Ascending aorta (tissue), 2 donors: ENCODE measurements at regions of chr19 and their contacts with region 1.

Region 1: GRCh38 chr19:44723952-44724319 is 24.6 kb upstream of the BCL3 start:
- DNase-seq: peak in 1 of 2 donors; percentile 89
- H3K4me3 ChIP-seq: no peak overlapping the region
- H3K27ac ChIP-seq: no peak overlapping the region
- H3K4me1 ChIP-seq: peaks cover 4 to 24% of the 10 kb centered on the region in 2 donors
- H3K27me3 ChIP-seq: no peaks in the 10 kb centered on the region
- CTCF ChIP-seq: peak; percentile 96 to 99 (median 97)

Region 2: DNA sequence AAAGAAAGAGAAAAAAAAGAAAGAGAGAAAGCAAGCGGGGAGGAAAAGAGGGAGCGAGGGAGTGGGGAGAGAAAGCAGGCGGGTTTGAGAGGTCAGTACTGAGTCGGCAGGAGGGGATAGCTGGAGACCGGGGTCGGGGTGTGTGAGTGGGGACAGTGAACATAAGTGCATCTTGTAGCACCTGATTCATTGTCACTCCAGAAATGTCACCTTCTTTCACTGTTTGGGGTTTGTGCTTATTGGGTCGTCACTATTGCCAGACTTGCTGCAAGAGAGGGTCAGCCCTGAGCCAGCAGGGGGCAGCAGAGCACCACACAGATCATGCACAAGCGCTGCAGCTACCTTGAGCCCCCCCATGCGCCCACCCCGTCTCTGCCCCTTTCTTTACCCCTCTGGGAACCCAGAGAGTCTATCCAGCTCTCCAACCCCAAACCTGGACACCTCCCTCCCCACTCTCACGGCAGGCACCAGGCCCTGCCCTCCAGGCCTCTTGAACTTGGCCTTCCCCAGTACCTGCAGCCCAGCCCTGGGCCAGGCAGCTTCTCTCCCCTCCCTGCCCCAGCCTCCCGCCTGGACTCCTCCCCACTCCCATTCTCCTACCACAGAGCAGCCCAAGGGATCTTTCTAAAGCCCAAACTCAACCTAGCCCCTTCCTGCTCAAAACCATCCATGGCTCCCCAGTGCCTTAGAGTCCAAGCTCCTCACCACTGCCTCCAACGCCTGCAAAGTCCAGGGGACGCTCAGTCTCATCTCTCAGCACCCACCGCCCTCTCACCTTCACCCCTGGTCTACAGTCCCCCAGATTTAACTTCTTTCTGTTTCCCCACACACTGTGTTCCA is 34.7 kb before region 1 on chr19:
- intact Hi-C with region 1: loop called (anchors 2 kb)
- DNase-seq: peak in 1 of 2 donors; percentile 80
- H3K4me3 ChIP-seq: no peak overlapping the region
- H3K27ac ChIP-seq: no peak overlapping the region
- H3K4me1 ChIP-seq: peaks cover 0 to 12% of the 10 kb centered on the region in 2 donors
- H3K27me3 ChIP-seq: no peaks in the 10 kb centered on the region
- CTCF ChIP-seq: peak; percentile 91 to 95 (median 91)

Region 3: GRCh38 chr19:44741841-44742352 is 18.0 kb after region 1 on chr19:
- intact Hi-C with region 1: loop called (anchors 2 kb)
- DNase-seq: peak; percentile 97 to 99
- H3K4me3 ChIP-seq: peak overlapping the region in 1 of 2 donors; percentile 17
- H3K27ac ChIP-seq: peak overlapping the region; percentile 82 to 83
- H3K4me1 ChIP-seq: peaks cover 24 to 32% of the 10 kb centered on the region in 2 donors
- H3K27me3 ChIP-seq: no peaks in the 10 kb centered on the region
- CTCF ChIP-seq: no peak

Region 4: DNA sequence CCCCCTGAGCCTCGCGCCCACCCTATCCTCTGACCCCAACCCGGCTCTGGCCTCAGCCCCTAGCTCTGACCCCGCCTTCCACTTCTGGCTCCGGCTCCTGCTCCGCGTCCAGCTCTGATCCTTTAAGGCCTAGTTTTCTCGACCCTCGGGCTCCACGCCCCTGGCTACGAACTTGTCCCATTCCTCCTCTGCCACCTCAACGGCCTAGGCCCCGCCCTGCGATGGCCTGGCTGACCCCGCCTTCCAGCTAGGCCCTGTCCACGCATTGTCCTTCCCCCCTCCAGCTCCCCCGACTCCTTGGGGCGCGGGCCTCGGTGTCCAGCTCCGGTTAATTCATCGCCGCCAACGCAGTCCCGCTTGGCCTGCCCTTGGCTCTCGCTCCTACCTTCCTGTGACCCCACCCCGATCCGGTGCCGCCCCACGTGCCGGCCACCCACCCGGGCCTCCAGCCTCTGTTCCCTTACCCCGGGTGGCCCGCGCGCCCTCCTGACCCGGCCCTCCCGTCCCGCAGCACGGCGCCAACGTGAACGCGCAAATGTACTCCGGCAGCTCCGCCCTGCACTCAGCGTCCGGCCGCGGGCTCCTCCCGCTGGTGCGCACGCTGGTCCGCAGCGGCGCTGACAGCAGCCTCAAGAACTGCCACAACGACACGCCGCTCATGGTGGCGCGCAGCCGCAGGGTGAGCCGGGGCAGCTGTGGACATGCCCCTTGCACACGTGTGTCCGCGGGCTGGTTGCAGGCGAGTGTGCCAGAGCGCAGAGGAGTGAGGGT is 34.0 kb after region 1 on chr19:
- intact Hi-C with region 1: loop called (anchors 5 kb)
- DNase-seq: peak in 1 of 2 donors; percentile 83
- H3K4me3 ChIP-seq: peak overlapping the region; percentile 59 to 60
- H3K27ac ChIP-seq: peak overlapping the region; percentile 84 to 91
- H3K4me1 ChIP-seq: peaks cover 16 to 46% of the 10 kb centered on the region in 2 donors
- H3K27me3 ChIP-seq: no peaks in the 10 kb centered on the region
- CTCF ChIP-seq: peak in 2 of 3 experiments; percentile 22 to 55

Region 5: DNA sequence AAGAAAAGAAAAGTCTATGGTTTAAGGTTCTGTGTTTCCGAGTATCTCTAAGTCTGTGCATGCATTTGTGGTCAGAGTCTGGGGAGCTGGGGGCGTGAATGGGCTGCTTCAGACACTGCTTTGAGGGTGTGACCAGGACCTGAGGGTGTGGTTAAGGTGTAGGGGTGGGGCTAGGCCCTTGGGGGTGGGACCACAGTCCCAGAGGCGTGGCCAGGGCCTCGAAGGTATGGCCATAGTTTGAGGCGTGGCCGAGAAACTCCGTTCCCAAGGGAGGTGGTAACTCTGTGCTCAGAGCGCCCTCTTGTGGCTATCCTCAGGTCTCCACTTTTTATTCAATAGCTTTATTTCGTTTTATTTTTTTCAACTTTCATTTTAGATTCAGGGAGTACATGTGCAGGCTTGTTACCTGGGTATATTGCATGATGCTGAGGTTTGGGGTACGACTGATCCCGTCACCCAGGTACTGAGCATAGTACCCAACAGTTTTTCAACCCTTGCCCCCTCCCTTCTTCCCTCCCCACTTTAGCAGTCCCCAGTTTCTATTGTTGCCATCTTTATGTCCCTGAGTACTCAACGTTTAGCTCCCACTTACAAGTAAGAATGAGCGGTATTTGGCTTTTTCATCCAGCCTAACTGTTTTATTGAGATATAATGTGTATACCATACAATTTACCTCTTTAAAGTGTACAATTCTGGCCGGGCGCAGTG is 46.8 kb after region 1 on chr19:
- intact Hi-C with region 1: loop called (anchors 1 kb)
- DNase-seq: peak; percentile 84 to 96
- H3K4me3 ChIP-seq: no peak overlapping the region
- H3K27ac ChIP-seq: peak overlapping the region in 1 of 2 donors; percentile 5
- H3K4me1 ChIP-seq: peaks cover 0 to 2% of the 10 kb centered on the region in 2 donors
- H3K27me3 ChIP-seq: no peaks in the 10 kb centered on the region
- CTCF ChIP-seq: peak; percentile 80 to 91 (median 85)

Region 6: DNA sequence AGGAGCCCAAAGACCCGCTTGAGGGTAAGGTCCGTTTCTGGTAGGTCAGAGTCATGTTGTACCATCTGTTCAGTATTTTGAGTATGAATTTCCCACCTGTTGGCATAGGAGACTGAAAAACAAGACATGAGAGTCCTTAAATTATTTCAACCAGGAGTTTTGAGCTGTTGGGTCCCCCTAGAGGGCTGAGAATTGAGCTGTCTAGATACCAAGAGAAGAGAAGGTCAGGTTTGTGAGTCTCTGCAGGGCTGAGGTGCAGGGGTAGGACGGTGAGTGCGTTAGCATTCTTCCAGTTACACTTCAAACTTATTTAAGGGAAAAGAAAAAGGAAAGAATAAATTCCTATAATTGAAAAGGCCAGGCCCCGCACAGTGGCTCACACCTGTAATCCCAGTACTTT is 58.8 kb after region 1 on chr19:
- intact Hi-C with region 1: no loop called
- DNase-seq: no peak
- H3K4me3 ChIP-seq: no peak overlapping the region
- H3K27ac ChIP-seq: no peak overlapping the region
- H3K4me1 ChIP-seq: peaks cover 0 to 3% of the 10 kb centered on the region in 2 donors
- H3K27me3 ChIP-seq: no peaks in the 10 kb centered on the region
- CTCF ChIP-seq: no peak

Region 7: GRCh38 chr19:44951179-44952159 is 227.5 kb after region 1 on chr19:
- intact Hi-C with region 1: no loop called
- DNase-seq: peak in 1 of 2 donors; percentile 82
- H3K4me3 ChIP-seq: peak overlapping the region in 1 of 2 donors; percentile 26
- H3K27ac ChIP-seq: no peak overlapping the region
- H3K4me1 ChIP-seq: peaks cover 10 to 23% of the 10 kb centered on the region in 2 donors
- H3K27me3 ChIP-seq: no peaks in the 10 kb centered on the region
- CTCF ChIP-seq: peak; percentile 53 to 88 (median 88)